Aorta (tissue), 5 donors: ENCODE measurements at regions of chr6 and their contacts with region 1.

Region 1: DNA sequence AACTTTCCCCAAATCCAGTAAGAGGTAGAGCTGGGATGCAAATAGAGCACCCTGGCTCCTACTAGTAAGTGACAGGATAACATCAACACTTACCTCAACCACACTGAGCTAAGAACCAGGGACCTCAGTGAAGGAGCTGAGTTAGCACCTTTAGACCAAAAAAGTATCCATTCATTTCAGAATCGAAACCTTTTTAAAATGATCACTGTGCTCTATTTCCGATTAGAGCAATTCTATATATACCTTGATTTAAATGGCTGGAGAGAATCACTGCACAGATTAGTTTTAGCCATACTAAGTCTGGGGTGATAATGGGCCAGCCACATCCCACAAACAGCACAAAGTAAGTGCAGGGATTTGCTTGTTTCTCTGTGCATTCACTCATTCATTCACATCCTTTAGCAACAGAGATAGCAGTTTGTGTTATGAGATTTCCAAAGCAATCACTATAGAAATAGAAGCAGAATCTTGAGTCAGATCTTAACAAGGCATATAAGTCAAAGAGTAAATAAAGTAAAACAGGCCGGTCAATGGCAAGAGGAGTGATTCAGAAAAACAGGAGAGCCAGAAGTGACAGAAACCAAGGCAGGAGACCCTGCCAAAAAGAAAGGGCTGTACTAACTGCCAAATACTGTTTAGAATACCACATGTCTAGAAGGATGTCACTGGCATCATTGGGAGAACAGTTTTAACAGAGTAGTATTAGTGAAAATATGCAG is 136.3 kb downstream of the KIF13A start:
- DNase-seq: no peak
- ATAC-seq: no peak
- H3K4me3 ChIP-seq: no peak overlapping the region
- H3K27ac ChIP-seq: peak overlapping the region; percentile 64 to 74
- H3K4me1 ChIP-seq: peaks cover 1 to 4% of the 10 kb centered on the region in 2 donors
- H3K27me3 ChIP-seq: no peaks in the 10 kb centered on the region

Region 2: DNA sequence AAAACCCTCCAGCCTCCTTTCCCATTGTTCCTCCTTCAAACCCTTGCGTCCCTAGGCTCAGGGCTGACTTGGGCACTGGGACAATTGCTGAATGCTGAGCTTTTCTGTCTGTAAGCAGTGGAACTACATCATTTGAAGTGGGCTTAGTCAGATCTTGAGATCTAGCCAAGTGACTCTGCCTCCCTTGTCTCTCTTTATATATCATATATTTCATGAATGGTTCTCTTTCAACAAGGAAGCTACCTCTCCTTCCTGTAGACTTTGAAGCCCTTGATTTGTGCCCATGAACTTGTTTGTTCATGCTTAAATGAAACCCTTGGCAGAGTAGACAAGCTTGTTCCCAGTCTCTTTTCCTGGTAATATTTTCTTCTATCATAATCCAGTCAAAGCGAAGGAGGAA is 196.2 kb after region 1 on chr6:
- intact Hi-C with region 1: loop called in 1 of 2 experiments (anchors 10 kb)
- DNase-seq: no peak
- ATAC-seq: no peak
- H3K4me3 ChIP-seq: no peak overlapping the region
- H3K27ac ChIP-seq: peak overlapping the region; percentile 26 to 48
- H3K4me1 ChIP-seq: peaks cover 4 to 10% of the 10 kb centered on the region in 2 donors
- H3K27me3 ChIP-seq: no peaks in the 10 kb centered on the region